Body of pancreas (tissue), 4 donors: ENCODE measurements at regions of chr13 and their contacts with region 1.

Region 1: DNA sequence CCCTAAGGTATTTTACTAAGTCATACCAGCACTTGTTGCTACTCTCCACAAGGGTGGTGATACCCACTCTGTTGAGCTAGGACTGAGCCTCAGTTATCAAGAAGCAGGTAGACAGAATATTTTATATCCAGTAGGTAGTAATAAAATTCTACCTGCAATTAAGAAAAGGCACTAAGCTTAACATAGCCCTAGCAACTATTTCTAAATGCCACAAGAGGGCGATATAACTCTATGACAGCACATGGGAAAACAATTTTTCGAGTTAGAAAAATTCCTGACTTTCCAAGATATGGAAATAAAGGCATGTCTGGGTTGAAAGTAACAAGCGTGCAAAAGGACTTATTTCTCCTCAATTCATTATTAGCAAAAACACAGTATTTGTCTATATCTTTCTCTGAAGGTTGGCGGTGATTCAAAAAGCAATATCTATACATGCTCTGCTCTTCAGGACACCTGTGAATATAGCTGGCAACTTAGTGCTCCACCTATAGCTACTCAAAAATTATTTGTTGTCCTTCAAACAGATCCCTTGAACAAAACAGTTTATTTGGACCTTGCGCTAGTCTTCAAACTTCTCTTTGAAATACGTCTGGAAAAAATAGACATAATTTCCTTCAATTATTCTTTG is 14.7 kb downstream of the CCDC169 start:
- DNase-seq: no peak
- ATAC-seq: peak; percentile 67
- H3K4me3 ChIP-seq: no peak overlapping the region
- H3K27ac ChIP-seq: no peak overlapping the region
- H3K4me1 ChIP-seq: no peaks in the 10 kb centered on the region
- H3K27me3 ChIP-seq: no peaks in the 10 kb centered on the region
- CTCF ChIP-seq: peak; percentile 69 to 88 (median 81)
- POLR2A ChIP-seq: no peak

Region 2: GRCh38 chr13:36736119-36736726 is 453.3 kb after region 1 on chr13:
- intact Hi-C with region 1: loop called (anchors 10 kb)
- DNase-seq: peak; percentile 54 to 58 (median 56)
- ATAC-seq: no peak
- H3K4me3 ChIP-seq: no peak overlapping the region
- H3K27ac ChIP-seq: no peak overlapping the region
- H3K4me1 ChIP-seq: no peaks in the 10 kb centered on the region
- H3K27me3 ChIP-seq: no peaks in the 10 kb centered on the region
- CTCF ChIP-seq: peak; percentile 56 to 69 (median 59)
- POLR2A ChIP-seq: no peak